Esophagus muscularis mucosa (tissue), 4 donors: ENCODE measurements at regions of chr13 and their contacts with region 1.

Region 1: DNA sequence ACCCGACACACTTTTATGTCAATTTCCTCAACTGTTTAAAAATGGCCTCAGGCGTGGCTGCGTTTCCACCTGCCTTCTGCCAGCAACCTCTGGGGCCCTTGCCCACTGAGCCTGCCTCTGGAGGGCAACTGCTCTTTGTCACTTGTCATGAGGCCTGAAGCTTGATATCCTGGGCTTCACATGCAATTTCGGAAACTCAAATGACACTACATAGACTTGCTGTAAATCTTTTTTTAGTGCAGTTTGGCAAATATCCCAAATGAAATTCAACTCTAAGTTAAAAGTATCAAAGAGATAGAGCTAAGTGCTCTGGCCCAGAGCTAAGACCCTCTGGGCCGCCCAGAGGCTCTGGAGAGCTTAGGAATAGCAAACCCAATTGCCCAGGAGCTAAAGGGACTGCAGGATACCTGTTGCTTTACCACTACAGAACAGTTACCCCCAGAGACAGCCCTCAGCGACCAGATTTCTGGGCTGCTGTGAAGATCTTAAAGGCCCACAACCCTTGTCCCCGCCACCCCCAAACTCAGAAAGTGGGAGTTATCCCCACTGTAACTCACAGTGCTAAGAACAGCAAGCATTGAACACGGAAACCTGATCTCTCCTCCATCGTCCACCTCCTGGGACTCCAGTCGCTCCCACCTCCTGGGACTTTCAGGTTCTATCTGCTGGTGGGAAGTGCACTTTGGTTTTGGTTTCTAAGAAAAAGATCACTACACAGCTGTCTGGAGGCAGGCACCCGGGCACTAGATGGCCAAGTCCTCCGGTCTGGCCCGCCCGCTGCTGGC is 19.4 kb downstream of the GJA3 start:
- DNase-seq: no peak
- H3K4me3 ChIP-seq: peak overlapping the region in 2 of 4 donors; percentile 17 to 24
- H3K27ac ChIP-seq: no peak overlapping the region
- H3K4me1 ChIP-seq: peaks cover 14 to 20% (median 18%) of the 10 kb centered on the region in 4 donors
- H3K27me3 ChIP-seq: peaks cover 0 to 85% (median 18%) of the 10 kb centered on the region in 4 donors
- CTCF ChIP-seq: no peak
- EP300 ChIP-seq: no peak
- POLR2A ChIP-seq: no peak

Region 2: GRCh38 chr13:19882231-19882630 is 259.2 kb before region 1 on chr13:
- intact Hi-C with region 1: no loop called
- DNase-seq: no peak
- H3K4me3 ChIP-seq: no peak overlapping the region
- H3K27ac ChIP-seq: no peak overlapping the region
- H3K4me1 ChIP-seq: no peaks in the 10 kb centered on the region
- H3K27me3 ChIP-seq: no peaks in the 10 kb centered on the region
- CTCF ChIP-seq: no peak
- EP300 ChIP-seq: no peak
- POLR2A ChIP-seq: no peak

Region 3: GRCh38 chr13:20175907-20176652 is 34.6 kb after region 1 on chr13:
- intact Hi-C with region 1: loop called (anchors 2 kb)
- DNase-seq: no peak
- H3K4me3 ChIP-seq: no peak overlapping the region
- H3K27ac ChIP-seq: peak overlapping the region in 3 of 4 donors; percentile 21 to 54 (median 42)
- H3K4me1 ChIP-seq: peaks cover 3 to 22% (median 16%) of the 10 kb centered on the region in 4 donors
- H3K27me3 ChIP-seq: peaks cover 0 to 39% (median 11%) of the 10 kb centered on the region in 4 donors
- CTCF ChIP-seq: no peak
- EP300 ChIP-seq: no peak
- POLR2A ChIP-seq: no peak